CD4-positive, alpha-beta T cell (primary cell): ENCODE measurements at regions of chr12 and their contacts with region 1.

Region 1: DNA sequence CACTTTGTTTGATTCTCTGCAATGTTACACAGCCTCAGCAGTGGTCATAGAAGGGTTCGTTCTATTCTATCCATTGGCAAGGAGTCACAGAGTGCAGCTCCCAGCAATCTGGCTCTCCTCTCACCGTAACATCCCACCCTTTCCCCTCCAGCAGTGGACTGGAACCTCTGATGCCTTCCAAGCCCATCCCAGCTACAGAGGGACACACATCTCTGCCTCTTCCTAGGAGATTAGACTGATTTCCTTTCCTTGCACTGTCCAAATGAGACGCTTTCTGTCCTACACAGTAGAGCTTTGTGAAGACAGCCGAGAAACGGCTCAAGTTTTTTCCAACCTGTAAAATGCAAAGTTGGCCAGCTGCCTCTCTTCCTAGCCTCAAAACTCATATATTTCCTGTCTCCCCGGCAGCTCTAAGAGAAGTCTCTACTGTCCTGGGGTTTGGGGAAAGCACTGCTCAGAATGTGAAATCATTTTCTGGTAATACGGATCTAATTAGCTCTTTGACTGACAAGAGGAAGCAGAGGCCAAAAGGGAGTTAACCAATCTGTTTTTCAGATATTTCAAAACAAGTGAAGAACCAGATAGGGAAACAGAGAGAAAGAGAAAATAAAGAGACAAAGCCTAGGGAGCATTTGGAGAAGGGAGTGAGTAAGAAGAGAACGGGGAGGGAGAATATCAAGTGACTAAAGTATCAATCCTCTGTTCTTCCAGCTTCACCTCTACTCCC is 516 bp downstream of the NINJ2 start:
- DNase-seq: peak in 1 of 14 experiments; percentile 25
- ATAC-seq: no peak
- H3K4me3 ChIP-seq: peak overlapping the region; percentile 1
- H3K4me3 Mint-ChIP-seq: peak overlapping the region; percentile 84
- H3K27ac ChIP-seq: no peak overlapping the region
- H3K27ac Mint-ChIP-seq: peak overlapping the region; percentile 63
- H3K4me1 ChIP-seq: peaks cover 67% of the 10 kb centered on the region
- H3K4me1 Mint-ChIP-seq: peaks cover 62% of the 10 kb centered on the region
- H3K27me3 ChIP-seq: no peaks in the 10 kb centered on the region
- H3K27me3 Mint-ChIP-seq: no peaks in the 10 kb centered on the region
- CTCF ChIP-seq: no peak

Region 2: DNA sequence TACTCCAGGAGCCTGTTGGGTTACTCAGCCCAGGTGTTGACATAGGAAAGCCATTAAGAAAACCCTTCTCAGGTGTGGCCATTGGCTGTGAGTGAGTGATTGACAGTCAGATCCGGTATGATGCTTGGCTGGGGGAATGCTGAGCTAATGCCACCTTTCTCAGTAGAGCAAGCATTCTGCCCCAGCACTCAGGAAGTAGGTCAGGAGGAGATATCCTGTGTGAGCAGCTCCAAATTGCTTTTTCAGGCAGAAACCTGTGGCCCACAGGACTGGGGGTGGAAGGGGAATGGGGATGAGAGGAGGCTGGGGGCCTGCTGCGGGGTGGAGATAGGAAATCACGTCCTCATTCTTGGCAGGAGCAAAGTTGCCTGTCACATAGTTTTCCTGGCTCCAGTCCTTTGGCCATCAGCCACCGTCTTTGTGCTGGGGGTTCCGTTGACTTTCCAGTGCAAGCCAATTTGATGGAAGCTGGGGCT is 55.2 kb before region 1 on chr12:
- CTCF ChIA-PET with region 1: no interaction called
- POLR2A ChIA-PET with region 1: no interaction called
- intact Hi-C with region 1: loop called in 1 of 2 experiments (anchors 2 kb)
- DNase-seq: peak in 1 of 14 experiments; percentile 38
- ATAC-seq: peak; percentile 39
- H3K4me3 ChIP-seq: no peak overlapping the region
- H3K4me3 Mint-ChIP-seq: no peak overlapping the region
- H3K27ac ChIP-seq: no peak overlapping the region
- H3K27ac Mint-ChIP-seq: no peak overlapping the region
- H3K4me1 ChIP-seq: peaks cover 22% of the 10 kb centered on the region
- H3K4me1 Mint-ChIP-seq: peaks cover 31% of the 10 kb centered on the region
- H3K27me3 ChIP-seq: no peaks in the 10 kb centered on the region
- H3K27me3 Mint-ChIP-seq: no peaks in the 10 kb centered on the region
- CTCF ChIP-seq: no peak

Region 3: GRCh38 chr12:724194-724855 is 61.6 kb after region 1 on chr12:
- CTCF ChIA-PET with region 1: no interaction called
- POLR2A ChIA-PET with region 1: interaction called, 12 read pairs
- intact Hi-C with region 1: no loop called
- DNase-seq: peak in 7 of 14 experiments; percentile 5 to 63 (median 54)
- ATAC-seq: peak; percentile 55
- H3K4me3 ChIP-seq: no peak overlapping the region
- H3K4me3 Mint-ChIP-seq: no peak overlapping the region
- H3K27ac ChIP-seq: no peak overlapping the region
- H3K27ac Mint-ChIP-seq: peak overlapping the region; percentile 87
- H3K4me1 ChIP-seq: peaks cover 47% of the 10 kb centered on the region
- H3K4me1 Mint-ChIP-seq: peaks cover 89% of the 10 kb centered on the region
- H3K27me3 ChIP-seq: no peaks in the 10 kb centered on the region
- H3K27me3 Mint-ChIP-seq: no peaks in the 10 kb centered on the region
- CTCF ChIP-seq: no peak